Activated T-helper 1 cell treated with anti-CD3 and anti-CD28 coated beads, Interleukin-12 subunit alpha, Interleukin-12 subunit beta, Interleukin-2, Interleukin-4 antibody, amounts not matched to agents 30 ng/mL and 10 ng/mL and 1 ng/mL, durations not matched to agents 14 hours and 24 hours and 36 hours (primary cell): ENCODE measurements at regions of chr9 and their contacts with region 1.

Region 1: DNA sequence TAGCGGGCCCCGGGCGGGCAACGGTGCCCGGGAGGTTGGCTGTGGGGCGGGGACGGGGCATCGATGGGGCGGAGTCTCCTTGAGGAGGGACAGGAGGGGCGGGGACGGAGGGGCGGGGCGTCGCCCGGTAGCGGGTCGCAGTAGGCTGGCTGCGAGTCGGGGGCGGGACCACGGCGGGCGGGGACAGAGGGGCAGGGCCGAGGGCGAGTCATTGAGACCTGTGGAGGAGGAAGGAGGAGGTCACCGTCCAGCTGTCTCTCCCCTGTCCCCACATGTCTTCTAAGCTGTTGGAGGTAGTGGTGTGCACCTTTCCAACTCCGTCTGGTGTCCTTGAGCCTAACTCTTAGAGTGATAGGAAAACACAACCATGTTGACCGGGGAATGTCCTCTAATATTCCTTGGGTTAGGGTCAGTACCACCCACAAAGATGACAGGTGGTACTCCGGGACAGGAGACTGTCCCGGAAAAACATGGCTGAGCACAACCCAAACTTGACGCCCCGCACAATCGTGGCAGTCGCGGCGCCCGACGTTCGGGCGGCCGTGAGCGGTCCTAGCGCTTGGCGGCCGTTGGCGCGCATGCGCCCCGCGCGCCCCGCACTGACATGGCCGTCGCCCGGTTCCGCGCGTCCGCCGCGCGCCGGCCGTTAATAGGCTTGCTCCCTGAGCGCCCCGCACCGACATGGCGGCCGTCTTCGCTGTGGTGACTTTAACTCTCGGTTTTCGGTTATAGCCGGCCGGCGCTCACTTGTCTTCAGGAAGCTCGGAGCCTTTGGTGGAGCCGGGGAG is at the starts of genes CRAT and PTPA:
- DNase-seq: peak; percentile 89
- H3K4me3 Mint-ChIP-seq: peak within 1 kb of the TSS; percentile 96
- H3K27ac Mint-ChIP-seq: peak within 1 kb of the TSS; percentile 94
- H3K4me1 Mint-ChIP-seq: peaks cover 36% of the 10 kb centered on the region
- H3K27me3 Mint-ChIP-seq: no peaks in the 10 kb centered on the region
- total RNA-seq, gene CRAT: 9.9 and 10.0 TPM in 2 replicates
- total RNA-seq, gene PTPA: 105 and 114 TPM in 2 replicates

Region 2: DNA sequence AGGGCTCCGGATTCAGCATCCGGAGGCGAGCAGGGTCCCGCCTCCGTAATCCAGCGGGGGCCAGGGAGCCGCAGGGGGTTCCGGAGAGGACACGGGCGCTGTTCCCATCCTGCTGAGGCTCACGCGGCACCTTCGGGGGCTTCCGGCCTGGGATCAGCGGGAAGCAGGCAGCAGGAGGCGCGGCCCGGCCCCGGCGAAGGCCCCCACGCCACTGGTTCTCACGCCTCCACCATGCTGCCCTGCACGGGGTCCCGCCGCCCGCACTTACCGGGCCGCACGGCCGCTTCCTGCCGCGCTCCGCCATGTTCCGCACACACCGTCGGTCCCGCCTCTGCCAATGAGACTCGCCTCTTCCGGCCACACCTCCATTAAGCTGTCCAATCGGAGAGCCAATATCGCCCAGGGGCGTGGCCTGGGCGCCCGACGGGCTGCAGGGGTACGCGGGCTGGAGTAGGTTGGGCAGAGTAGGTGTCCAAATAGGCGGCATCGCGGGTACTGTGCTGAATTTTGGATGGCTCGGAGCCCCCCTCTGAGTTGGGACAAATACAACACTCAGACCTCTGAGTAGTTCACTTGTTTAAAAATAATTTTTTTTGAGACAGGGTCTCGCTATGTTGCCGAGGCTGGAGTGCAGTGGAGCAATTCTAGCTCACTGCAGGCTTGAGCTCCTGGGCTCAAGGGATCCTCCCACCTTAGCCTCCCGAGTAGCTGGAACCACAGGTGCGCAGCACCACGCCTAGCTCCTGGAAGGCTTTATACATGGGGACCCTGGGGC is 281.3 kb before region 1 on chr9 and contains the start of gene SPOUT1:
- intact Hi-C with region 1: loop called (anchors 1 kb)
- DNase-seq: peak; percentile 95
- H3K4me3 Mint-ChIP-seq: peak within 1 kb of the TSS; percentile 97
- H3K27ac Mint-ChIP-seq: peak within 1 kb of the TSS; percentile 88
- H3K4me1 Mint-ChIP-seq: peaks cover 23% of the 10 kb centered on the region
- H3K27me3 Mint-ChIP-seq: no peaks in the 10 kb centered on the region
- total RNA-seq, gene SPOUT1: 151 and 158 TPM in 2 replicates

Region 3: DNA sequence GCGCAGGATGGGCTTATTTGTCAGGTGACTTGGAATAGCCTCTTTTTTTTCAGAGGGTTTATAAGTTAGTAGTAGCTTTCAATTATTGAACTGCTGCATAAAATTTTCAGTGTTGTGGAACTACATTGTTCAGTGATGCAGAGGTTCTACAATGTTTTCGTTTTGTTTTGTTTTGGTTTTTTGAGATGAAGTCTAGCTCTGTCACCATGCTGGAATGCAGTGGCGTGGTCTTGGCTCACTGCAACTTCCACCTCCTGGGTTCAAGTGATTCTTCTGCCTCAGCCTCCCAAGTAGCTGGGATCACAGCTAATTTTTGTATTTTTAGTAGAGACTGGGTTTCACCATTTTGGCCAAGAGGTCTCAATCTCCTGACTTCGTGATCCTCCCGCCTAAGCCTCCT is 141.4 kb before region 1 on chr9:
- intact Hi-C with region 1: no loop called
- DNase-seq: no peak
- H3K4me3 Mint-ChIP-seq: no peak overlapping the region
- H3K27ac Mint-ChIP-seq: no peak overlapping the region
- H3K4me1 Mint-ChIP-seq: no peaks in the 10 kb centered on the region
- H3K27me3 Mint-ChIP-seq: no peaks in the 10 kb centered on the region

Region 4: GRCh38 chr9:129036241-129036922 is 74.6 kb before region 1 on chr9 and contains the start of gene MIGA2:
- intact Hi-C with region 1: loop called (anchors 1 kb)
- DNase-seq: peak; percentile 95
- H3K4me3 Mint-ChIP-seq: peak within 1 kb of the TSS; percentile 97
- H3K27ac Mint-ChIP-seq: peak within 1 kb of the TSS; percentile 79
- H3K4me1 Mint-ChIP-seq: peaks cover 20% of the 10 kb centered on the region
- H3K27me3 Mint-ChIP-seq: peaks cover 2% of the 10 kb centered on the region
- total RNA-seq, gene MIGA2: 43.4 and 43.8 TPM in 2 replicates

Region 5: DNA sequence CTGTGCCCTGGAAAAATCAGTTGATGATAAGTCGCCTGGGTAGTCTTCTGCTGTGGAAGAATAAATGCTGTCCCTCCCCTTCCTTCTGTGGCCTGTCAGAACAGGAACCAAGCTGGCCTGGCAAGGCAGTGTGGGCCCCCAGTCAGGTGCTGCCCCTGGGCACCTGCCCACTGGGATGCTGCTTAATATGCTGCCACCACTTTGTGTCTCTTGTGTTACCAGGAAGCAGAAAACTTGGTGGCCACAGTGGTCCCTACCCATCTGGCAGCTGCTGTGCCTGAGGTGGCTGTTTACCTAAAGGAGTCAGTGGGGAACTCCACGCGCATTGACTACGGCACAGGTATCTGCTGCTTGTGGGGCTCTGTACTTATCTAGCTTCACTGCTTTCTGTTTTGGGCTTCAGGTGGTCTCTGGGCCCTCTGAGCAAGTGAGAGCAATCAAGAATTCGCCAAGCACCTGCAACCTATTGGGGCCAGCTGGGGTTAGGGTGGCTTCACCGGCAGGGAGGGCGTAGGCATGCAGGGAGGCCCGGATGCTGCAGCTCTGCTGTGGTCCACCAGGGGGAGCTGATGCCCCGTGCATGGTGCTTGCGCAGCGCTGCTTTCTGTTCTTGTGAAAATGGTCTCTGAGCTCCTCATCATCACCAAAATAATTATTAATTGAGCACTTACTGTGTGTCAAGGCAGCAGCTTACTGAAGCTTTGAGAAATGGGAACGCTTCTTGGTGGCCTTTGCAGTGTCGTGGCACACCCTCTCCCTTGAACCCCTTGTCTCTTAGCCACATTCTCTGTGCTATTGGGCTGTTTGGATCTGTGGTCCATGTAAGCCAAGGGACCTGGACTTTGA is 20.6 kb after region 1 on chr9:
- intact Hi-C with region 1: loop called (anchors 1 kb)
- DNase-seq: peak; percentile 75
- H3K4me3 Mint-ChIP-seq: no peak overlapping the region
- H3K27ac Mint-ChIP-seq: no peak overlapping the region
- H3K4me1 Mint-ChIP-seq: peaks cover 6% of the 10 kb centered on the region
- H3K27me3 Mint-ChIP-seq: no peaks in the 10 kb centered on the region

Region 6: GRCh38 chr9:129193661-129194060 is 82.7 kb after region 1 on chr9:
- intact Hi-C with region 1: no loop called
- DNase-seq: no peak
- H3K4me3 Mint-ChIP-seq: no peak overlapping the region
- H3K27ac Mint-ChIP-seq: no peak overlapping the region
- H3K4me1 Mint-ChIP-seq: no peaks in the 10 kb centered on the region
- H3K27me3 Mint-ChIP-seq: peaks cover 23% of the 10 kb centered on the region